Dendritic cell treated with granulocyte-macrophage colony-stimulating factor and Interleukin-4, amounts not matched to agents 40 ng/mL and 50 ng/mL, for 4 days (primary cell): ENCODE measurements at regions of chr7 and their contacts with region 1.

Region 1: GRCh38 chr7:107890962-107891635 is at the start of gene DLD:
- H3K4me3 Mint-ChIP-seq: peak within 1 kb of the TSS; percentile 84
- H3K27ac Mint-ChIP-seq: peak within 1 kb of the TSS; percentile 95
- H3K4me1 Mint-ChIP-seq: peaks cover 13% of the 10 kb centered on the region
- H3K27me3 Mint-ChIP-seq: peaks cover 2% of the 10 kb centered on the region

Region 2: GRCh38 chr7:107579885-107580715 is 311.0 kb before region 1 on chr7 and contains the start of gene BCAP29:
- intact Hi-C with region 1: loop called (anchors 5 kb)
- H3K4me3 Mint-ChIP-seq: peak within 1 kb of the TSS; percentile 86
- H3K27ac Mint-ChIP-seq: peak within 1 kb of the TSS; percentile 88
- H3K4me1 Mint-ChIP-seq: peaks cover 11% of the 10 kb centered on the region
- H3K27me3 Mint-ChIP-seq: no peaks in the 10 kb centered on the region

Region 3: GRCh38 chr7:107743567-107744344 is 147.3 kb before region 1 on chr7 and contains the start of gene CBLL1:
- intact Hi-C with region 1: loop called (anchors 1 kb)
- H3K4me3 Mint-ChIP-seq: peak within 1 kb of the TSS; percentile 97
- H3K27ac Mint-ChIP-seq: peak within 1 kb of the TSS; percentile 99
- H3K4me1 Mint-ChIP-seq: peaks cover 22% of the 10 kb centered on the region
- H3K27me3 Mint-ChIP-seq: no peaks in the 10 kb centered on the region

Region 4: GRCh38 chr7:107879400-107880035 is 11.6 kb before region 1 on chr7:
- intact Hi-C with region 1: loop called (anchors 2 kb)
- H3K4me3 Mint-ChIP-seq: no peak overlapping the region
- H3K27ac Mint-ChIP-seq: no peak overlapping the region
- H3K4me1 Mint-ChIP-seq: peaks cover 9% of the 10 kb centered on the region
- H3K27me3 Mint-ChIP-seq: peaks cover 10% of the 10 kb centered on the region

Region 5: DNA sequence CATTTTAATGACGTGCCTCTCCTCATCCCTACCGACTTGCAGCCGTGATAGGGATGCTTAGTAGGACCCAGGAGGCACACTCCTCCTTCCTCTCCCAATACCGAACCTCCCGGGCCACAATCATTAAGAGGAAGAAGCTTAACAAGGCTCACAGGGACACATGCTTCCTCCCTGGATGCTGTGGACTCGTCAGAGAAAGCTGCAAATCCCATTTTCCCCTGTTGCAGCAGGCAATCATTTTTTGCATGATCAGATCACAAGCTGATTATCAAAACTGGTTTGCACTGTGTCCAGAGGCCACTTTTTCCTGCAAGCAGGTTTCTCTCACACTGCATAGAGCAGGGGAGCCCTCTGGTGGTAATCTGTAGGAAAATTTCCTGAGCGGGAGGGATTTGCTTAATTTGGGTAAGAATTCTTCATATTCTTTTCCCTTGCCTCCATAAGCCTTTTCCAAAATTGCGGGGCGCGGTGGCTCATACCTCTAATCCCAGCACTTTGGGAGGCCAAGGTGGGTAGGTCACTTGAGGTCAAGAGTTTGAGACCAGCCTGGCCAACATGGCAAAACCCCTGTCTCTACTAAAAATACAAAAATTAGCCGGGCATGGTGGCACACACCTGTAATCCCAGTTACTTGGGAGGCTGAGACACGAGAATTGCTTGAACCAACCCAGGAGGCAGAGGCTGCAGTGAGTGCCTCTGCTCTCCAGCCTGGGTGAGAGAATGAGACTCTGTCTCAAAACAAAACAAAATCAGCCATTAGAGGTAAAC is 255.2 kb after region 1 on chr7:
- intact Hi-C with region 1: loop called (anchors 10 kb)
- H3K4me3 Mint-ChIP-seq: no peak overlapping the region
- H3K27ac Mint-ChIP-seq: no peak overlapping the region
- H3K4me1 Mint-ChIP-seq: no peaks in the 10 kb centered on the region
- H3K27me3 Mint-ChIP-seq: peaks cover 6% of the 10 kb centered on the region

Region 6: DNA sequence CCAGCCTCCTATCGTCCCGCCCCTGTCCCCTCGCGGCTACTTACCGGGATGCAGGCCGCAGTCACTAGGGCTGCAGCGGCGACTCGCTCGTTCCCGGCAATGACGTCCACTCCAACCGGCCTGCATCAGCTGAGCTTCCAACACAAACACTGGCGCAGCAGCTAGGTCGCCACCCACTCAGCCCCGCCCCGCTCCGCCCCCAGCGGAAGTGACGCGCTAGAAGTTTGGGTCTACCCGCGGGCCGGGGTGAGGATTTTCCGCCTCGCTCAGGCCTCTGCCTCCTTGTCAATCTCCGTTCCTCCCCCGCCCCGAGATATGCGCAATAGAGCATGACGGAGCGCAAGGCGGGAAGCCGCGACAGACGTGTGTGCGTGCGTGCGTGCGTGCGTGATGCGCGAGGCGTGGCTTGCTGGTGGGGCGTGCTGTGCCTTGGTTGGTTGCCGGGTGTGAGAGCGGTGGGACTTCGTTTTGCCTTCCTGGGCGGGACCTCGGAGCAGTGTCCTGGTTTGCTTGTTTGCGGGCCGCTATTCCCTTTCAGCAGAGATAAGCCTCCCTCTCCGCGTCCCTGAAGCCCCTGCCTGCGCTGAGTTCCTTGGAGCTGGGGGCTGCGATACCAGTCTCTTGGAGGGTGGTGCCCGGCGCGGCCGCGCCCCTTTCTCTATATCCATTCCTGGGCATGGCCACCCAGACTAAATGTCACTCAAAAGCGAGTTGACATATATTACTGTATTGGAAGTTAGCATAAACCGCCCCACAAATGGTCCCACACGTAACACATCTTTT is 635.1 kb after region 1 on chr7 and contains the start of gene PNPLA8:
- intact Hi-C with region 1: loop called (anchors 5 kb)
- H3K4me3 Mint-ChIP-seq: peak within 1 kb of the TSS; percentile 90
- H3K27ac Mint-ChIP-seq: peak within 1 kb of the TSS; percentile 98
- H3K4me1 Mint-ChIP-seq: peaks cover 26% of the 10 kb centered on the region
- H3K27me3 Mint-ChIP-seq: no peaks in the 10 kb centered on the region